ENCODE measurements at regions of chr1 and their contacts with region 1.

Region 1: GRCh38 chr1:227234998-227235405 is 83.3 kb downstream of the CDC42BPA start:
- DNase-seq: peak; percentile 22
- ATAC-seq: peak; percentile 57
- H3K4me3 Mint-ChIP-seq: no peak overlapping the region
- H3K27ac Mint-ChIP-seq: no peak overlapping the region
- H3K4me1 Mint-ChIP-seq: no peaks in the 10 kb centered on the region
- H3K27me3 Mint-ChIP-seq: peaks cover 12% of the 10 kb centered on the region

Region 2: GRCh38 chr1:227437495-227438008 is 202.6 kb after region 1 on chr1:
- CTCF ChIA-PET with region 1: no interaction called
- POLR2A ChIA-PET with region 1: no interaction called
- intact Hi-C with region 1: loop called in 1 of 2 experiments (anchors 5 kb)
- DNase-seq: no peak
- ATAC-seq: no peak
- H3K4me3 Mint-ChIP-seq: no peak overlapping the region
- H3K27ac Mint-ChIP-seq: no peak overlapping the region
- H3K4me1 Mint-ChIP-seq: no peaks in the 10 kb centered on the region
- H3K27me3 Mint-ChIP-seq: peaks cover 24% of the 10 kb centered on the region